Heart right ventricle (tissue), 16 donors: ENCODE measurements at regions of chr4 and their contacts with region 1.

Region 1: GRCh38 chr4:38128478-38129459 is 168.6 kb downstream of the PTTG2 start:
- DNase-seq: no peak
- ATAC-seq: peak in 4 of 8 donors; percentile 13 to 49 (median 34)
- H3K4me3 ChIP-seq: no peak overlapping the region
- H3K27ac ChIP-seq: peak overlapping the region in 1 of 10 donors; percentile 73
- H3K4me1 ChIP-seq: peaks cover 0 to 56% (median 30%) of the 10 kb centered on the region in 9 donors
- H3K27me3 ChIP-seq: no peaks in the 10 kb centered on the region
- CTCF ChIP-seq: no peak

Region 2: GRCh38 chr4:37717576-37717975 is 411.2 kb before region 1 on chr4:
- intact Hi-C with region 1: no loop called
- DNase-seq: no peak
- ATAC-seq: no peak
- H3K4me3 ChIP-seq: no peak overlapping the region
- H3K27ac ChIP-seq: no peak overlapping the region
- H3K4me1 ChIP-seq: peaks cover 0 to 13% (median 3%) of the 10 kb centered on the region in 9 donors
- H3K27me3 ChIP-seq: no peaks in the 10 kb centered on the region
- CTCF ChIP-seq: no peak

Region 3: GRCh38 chr4:37917388-37917787 is 211.4 kb before region 1 on chr4:
- intact Hi-C with region 1: no loop called
- DNase-seq: peak; percentile 39 to 42
- ATAC-seq: peak in 5 of 8 donors; percentile 53 to 78 (median 58)
- H3K4me3 ChIP-seq: no peak overlapping the region
- H3K27ac ChIP-seq: no peak overlapping the region
- H3K4me1 ChIP-seq: peaks cover 0 to 12% (median 3%) of the 10 kb centered on the region in 9 donors
- H3K27me3 ChIP-seq: no peaks in the 10 kb centered on the region
- CTCF ChIP-seq: no peak

Region 4: GRCh38 chr4:38091636-38092035 is 37.1 kb before region 1 on chr4:
- intact Hi-C with region 1: loop called in 1 of 10 experiments (anchors 5 kb)
- DNase-seq: no peak
- ATAC-seq: no peak
- H3K4me3 ChIP-seq: no peak overlapping the region
- H3K27ac ChIP-seq: peak overlapping the region in 1 of 10 donors; percentile 13
- H3K4me1 ChIP-seq: peaks cover 0 to 45% (median 15%) of the 10 kb centered on the region in 9 donors
- H3K27me3 ChIP-seq: no peaks in the 10 kb centered on the region
- CTCF ChIP-seq: no peak